MCF 10A (cell line): ENCODE measurements at regions of chr7 and their contacts with region 1.

Region 1: GRCh38 chr7:76359111-76359978 is 554 bp upstream of the YWHAG start:
- DNase-seq: peak; percentile 98
- H3K4me3 Mint-ChIP-seq: peak overlapping the region; percentile 89
- H3K27ac Mint-ChIP-seq: peak overlapping the region; percentile 97
- H3K4me1 Mint-ChIP-seq: peaks cover 27% of the 10 kb centered on the region
- H3K27me3 Mint-ChIP-seq: no peaks in the 10 kb centered on the region
- CTCF ChIP-seq: peak; percentile 70

Region 2: GRCh38 chr7:76291343-76292212 is 67.8 kb before region 1 on chr7:
- CTCF ChIA-PET with region 1: interaction called, 4 read pairs
- POLR2A ChIA-PET with region 1: interaction called, 24 read pairs
- intact Hi-C with region 1: no loop called
- DNase-seq: peak; percentile 99
- H3K4me3 Mint-ChIP-seq: peak overlapping the region; percentile 29
- H3K27ac Mint-ChIP-seq: peak overlapping the region; percentile 84
- H3K4me1 Mint-ChIP-seq: peaks cover 41% of the 10 kb centered on the region
- H3K27me3 Mint-ChIP-seq: no peaks in the 10 kb centered on the region
- CTCF ChIP-seq: peak; percentile 89

Region 3: GRCh38 chr7:76302347-76303201 is 56.8 kb before region 1 on chr7 and contains the start of gene HSPB1:
- CTCF ChIA-PET with region 1: no interaction called
- POLR2A ChIA-PET with region 1: interaction called, 14 read pairs
- intact Hi-C with region 1: no loop called
- DNase-seq: peak; percentile 95
- H3K4me3 Mint-ChIP-seq: peak within 1 kb of the TSS; percentile 85
- H3K27ac Mint-ChIP-seq: peak within 1 kb of the TSS; percentile 81
- H3K4me1 Mint-ChIP-seq: peaks cover 34% of the 10 kb centered on the region
- H3K27me3 Mint-ChIP-seq: no peaks in the 10 kb centered on the region
- CTCF ChIP-seq: no peak
- total RNA-seq, gene HSPB1: 158 and 198 TPM in 2 replicates

Region 4: GRCh38 chr7:76340617-76341131 is 18.7 kb before region 1 on chr7:
- CTCF ChIA-PET with region 1: interaction called, 5 read pairs
- POLR2A ChIA-PET with region 1: interaction called, 33 read pairs
- intact Hi-C with region 1: loop called (anchors 2 kb)
- DNase-seq: peak; percentile 40
- H3K4me3 Mint-ChIP-seq: no peak overlapping the region
- H3K27ac Mint-ChIP-seq: no peak overlapping the region
- H3K4me1 Mint-ChIP-seq: peaks cover 60% of the 10 kb centered on the region
- H3K27me3 Mint-ChIP-seq: no peaks in the 10 kb centered on the region
- CTCF ChIP-seq: no peak

Region 5: DNA sequence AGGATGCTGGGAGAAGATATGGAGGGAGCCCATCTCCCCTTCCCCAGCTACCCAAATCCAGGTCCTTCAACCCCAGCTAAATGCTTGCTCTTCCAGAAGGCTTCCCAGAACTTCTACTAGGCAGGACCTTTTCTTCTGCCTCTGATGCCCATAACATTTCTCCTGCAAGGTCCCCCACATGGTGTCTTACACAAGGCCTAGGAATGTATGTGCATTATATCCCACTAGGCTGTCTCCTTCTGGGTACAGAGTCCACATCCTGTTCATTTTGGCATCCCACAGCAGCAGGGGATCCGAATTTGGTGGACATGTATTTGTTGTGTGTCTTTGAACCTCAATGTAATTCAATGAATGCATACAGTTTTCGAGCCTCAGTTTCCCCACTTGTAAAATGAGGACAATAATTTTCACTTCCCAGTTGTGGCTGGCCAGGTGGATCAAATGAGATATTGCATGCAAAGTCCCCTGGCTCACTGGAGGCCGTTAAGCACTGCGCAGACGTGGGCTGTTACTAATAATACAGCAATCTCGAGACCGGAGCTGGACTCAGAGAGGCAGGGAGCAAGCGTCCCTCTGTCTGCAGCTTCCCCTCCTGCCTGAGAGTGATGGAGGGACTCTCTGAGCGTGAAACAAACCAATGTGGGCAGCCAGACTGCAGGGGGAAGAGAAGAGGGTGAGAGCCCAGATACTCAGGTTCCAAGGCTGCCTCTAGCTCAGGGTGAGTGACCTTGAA is 18.0 kb after region 1 on chr7:
- CTCF ChIA-PET with region 1: interaction called, 7 read pairs
- POLR2A ChIA-PET with region 1: interaction called, 12 read pairs
- intact Hi-C with region 1: no loop called
- DNase-seq: no peak
- H3K4me3 Mint-ChIP-seq: no peak overlapping the region
- H3K27ac Mint-ChIP-seq: no peak overlapping the region
- H3K4me1 Mint-ChIP-seq: peaks cover 10% of the 10 kb centered on the region
- H3K27me3 Mint-ChIP-seq: no peaks in the 10 kb centered on the region
- CTCF ChIP-seq: no peak

Region 6: GRCh38 chr7:76393116-76394031 is 34.0 kb after region 1 on chr7:
- CTCF ChIA-PET with region 1: interaction called, 3 read pairs
- POLR2A ChIA-PET with region 1: interaction called, 39 read pairs
- intact Hi-C with region 1: loop called (anchors 2 kb)
- DNase-seq: peak; percentile 87
- H3K4me3 Mint-ChIP-seq: peak overlapping the region; percentile 71
- H3K27ac Mint-ChIP-seq: peak overlapping the region; percentile 93
- H3K4me1 Mint-ChIP-seq: peaks cover 11% of the 10 kb centered on the region
- H3K27me3 Mint-ChIP-seq: no peaks in the 10 kb centered on the region
- CTCF ChIP-seq: no peak

Region 7: DNA sequence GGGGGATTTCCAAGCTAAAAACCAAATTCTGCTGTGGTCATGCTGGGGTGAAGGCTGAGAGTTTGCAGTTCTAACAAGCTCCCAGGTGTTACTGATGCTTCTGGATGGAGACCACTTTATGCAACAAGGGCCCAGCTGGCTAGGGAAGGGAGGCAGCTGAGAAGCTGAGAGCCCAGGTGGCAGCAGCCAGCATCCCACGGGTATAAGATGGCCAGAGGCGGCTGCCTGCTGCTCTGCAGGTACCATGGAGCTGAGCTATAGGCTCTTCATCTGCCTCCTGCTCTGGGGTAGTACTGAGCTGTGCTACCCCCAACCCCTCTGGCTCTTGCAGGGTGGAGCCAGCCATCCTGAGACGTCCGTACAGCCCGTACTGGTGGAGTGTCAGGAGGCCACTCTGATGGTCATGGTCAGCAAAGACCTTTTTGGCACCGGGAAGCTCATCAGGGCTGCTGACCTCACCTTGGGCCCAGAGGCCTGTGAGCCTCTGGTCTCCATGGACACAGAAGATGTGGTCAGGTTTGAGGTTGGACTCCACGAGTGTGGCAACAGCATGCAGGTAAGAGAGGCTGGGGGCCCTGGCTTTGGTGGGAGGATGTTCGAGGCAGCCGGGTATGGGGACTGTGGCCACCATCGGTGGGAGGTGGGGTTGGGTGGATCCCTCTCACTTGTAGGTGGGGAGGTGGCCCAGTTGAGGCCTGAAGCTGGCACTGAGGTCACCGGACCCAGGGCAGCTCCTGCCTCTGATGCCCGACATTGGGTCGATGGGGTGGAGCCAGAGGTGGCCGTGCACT is 65.6 kb after region 1 on chr7 and contains the start of gene ZP3:
- CTCF ChIA-PET with region 1: interaction called, 4 read pairs
- POLR2A ChIA-PET with region 1: interaction called, 27 read pairs
- intact Hi-C with region 1: loop called (anchors 1 kb)
- DNase-seq: no peak
- H3K4me3 Mint-ChIP-seq: peak within 1 kb of the TSS; percentile 1
- H3K27ac Mint-ChIP-seq: peak within 1 kb of the TSS; percentile 86
- H3K4me1 Mint-ChIP-seq: peaks cover 21% of the 10 kb centered on the region
- H3K27me3 Mint-ChIP-seq: no peaks in the 10 kb centered on the region
- CTCF ChIP-seq: no peak
- total RNA-seq, gene ZP3: 5.6 TPM in 2 replicates